H1 (cell line): ENCODE measurements at regions of chr20 and their contacts with region 1.

Region 1: DNA sequence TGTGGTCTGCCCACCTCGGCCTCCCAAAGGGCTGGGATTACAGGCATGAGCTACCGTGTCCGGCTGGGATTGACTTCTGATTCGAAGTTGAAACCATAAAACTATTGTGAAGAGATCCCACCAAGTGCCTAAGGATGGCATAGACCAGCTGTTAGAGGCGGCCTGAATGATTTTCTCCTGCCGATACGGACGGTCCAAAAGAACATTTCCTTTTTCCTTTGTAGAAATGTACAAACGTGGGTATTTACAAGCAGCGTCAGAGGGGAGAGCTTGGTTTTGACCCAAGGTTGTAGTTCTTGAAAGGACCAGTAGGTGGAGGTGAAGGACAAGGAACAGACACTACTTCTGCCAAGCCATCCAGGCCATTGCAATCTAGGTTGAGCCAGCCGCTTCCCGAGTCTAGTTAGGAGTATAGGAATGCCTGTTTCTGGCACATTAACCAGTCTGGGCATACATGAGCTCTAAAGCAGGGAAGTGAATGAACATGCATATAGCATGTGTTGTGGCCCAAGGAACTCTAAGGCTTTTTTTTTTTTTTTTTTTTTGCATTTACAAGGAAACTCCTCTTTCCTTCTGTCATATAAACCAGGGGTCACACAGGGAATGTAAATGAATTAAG is 29.1 kb downstream of the MOCS3 start:
- DNase-seq: peak in 1 of 2 experiments; percentile 83
- H3K4me3 ChIP-seq: no peak overlapping the region
- H3K27ac ChIP-seq: no peak overlapping the region
- H3K4me1 ChIP-seq: peaks cover 3 to 17% (median 7%) of the 10 kb centered on the region in 4 experiments; a peak in 6 of 7 replicates
- H3K27me3 ChIP-seq: no peaks in the 10 kb centered on the region; a peak in 1 of 7 replicates
- CTCF ChIP-seq: peak; percentile 46 to 93 (median 85)
- EP300 ChIP-seq: no peak
- POLR2A ChIP-seq: no peak
- RAD21 ChIP-seq: peak; percentile 99

Region 2: DNA sequence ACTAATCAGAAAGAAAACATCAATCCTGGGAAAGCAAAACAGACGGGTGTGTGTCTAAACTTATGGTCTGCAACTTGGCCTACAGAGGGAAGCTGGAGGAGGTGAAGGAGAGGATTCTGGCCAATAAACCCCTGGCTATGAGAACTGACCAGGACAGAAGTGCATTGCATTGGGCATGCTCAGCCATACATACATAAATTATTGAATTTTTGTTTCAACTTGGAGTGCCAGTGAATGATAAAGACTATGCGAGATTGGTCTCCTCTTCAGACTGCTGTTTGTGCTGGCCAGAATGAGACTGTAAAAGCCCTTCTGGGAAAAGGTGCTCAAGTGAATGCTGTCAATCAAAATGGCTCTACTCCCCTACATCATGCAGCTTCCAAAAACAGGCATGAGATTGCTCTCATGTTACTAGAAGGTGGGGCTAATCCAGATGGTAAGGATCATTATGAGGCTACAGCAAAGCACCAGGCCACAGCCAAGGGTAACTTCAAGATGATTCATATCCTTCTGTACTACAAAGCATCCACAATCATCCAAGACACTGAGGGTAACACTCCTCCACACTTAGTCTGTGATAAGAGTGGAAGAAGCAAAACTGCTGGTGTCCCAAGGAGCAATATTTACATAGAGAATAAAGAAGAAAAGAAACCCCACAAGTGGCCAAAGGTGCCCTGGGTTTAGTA is 73.9 kb before region 1 on chr20:
- CTCF ChIA-PET with region 1: no interaction called
- POLR2A ChIA-PET with region 1: no interaction called
- DNase-seq: no peak
- H3K4me3 ChIP-seq: no peak overlapping the region
- H3K27ac ChIP-seq: no peak overlapping the region
- H3K4me1 ChIP-seq: peaks cover 0 to 12% (median 2%) of the 10 kb centered on the region in 4 experiments; a peak in 3 of 7 replicates
- H3K27me3 ChIP-seq: no peaks in the 10 kb centered on the region
- CTCF ChIP-seq: no peak
- EP300 ChIP-seq: no peak
- POLR2A ChIP-seq: no peak
- RAD21 ChIP-seq: no peak

Region 3: GRCh38 chr20:51042654-51043247 is 55.0 kb after region 1 on chr20:
- CTCF ChIA-PET with region 1: interaction called, 15 read pairs
- POLR2A ChIA-PET with region 1: no interaction called
- DNase-seq: peak in 1 of 2 experiments; percentile 60
- H3K4me3 ChIP-seq: no peak overlapping the region
- H3K27ac ChIP-seq: no peak overlapping the region
- H3K4me1 ChIP-seq: no peaks in the 10 kb centered on the region; a peak in 1 of 7 replicates
- H3K27me3 ChIP-seq: no peaks in the 10 kb centered on the region
- CTCF ChIP-seq: peak; percentile 66 to 69 (median 66)
- EP300 ChIP-seq: no peak
- POLR2A ChIP-seq: no peak
- RAD21 ChIP-seq: peak; percentile 48 to 60

Region 4: GRCh38 chr20:51326201-51326819 is 338.6 kb after region 1 on chr20:
- CTCF ChIA-PET with region 1: interaction called, 165 read pairs
- POLR2A ChIA-PET with region 1: interaction called, 8 read pairs
- DNase-seq: peak in 1 of 2 experiments; percentile 79
- H3K4me3 ChIP-seq: no peak overlapping the region
- H3K27ac ChIP-seq: no peak overlapping the region
- H3K4me1 ChIP-seq: peaks cover 0 to 4% (median 1%) of the 10 kb centered on the region in 4 experiments; a peak in 3 of 7 replicates
- H3K27me3 ChIP-seq: no peaks in the 10 kb centered on the region; a peak in 1 of 7 replicates
- CTCF ChIP-seq: peak; percentile 74 to 92 (median 74)
- EP300 ChIP-seq: no peak
- POLR2A ChIP-seq: no peak
- RAD21 ChIP-seq: peak; percentile 70 to 83

Region 5: DNA sequence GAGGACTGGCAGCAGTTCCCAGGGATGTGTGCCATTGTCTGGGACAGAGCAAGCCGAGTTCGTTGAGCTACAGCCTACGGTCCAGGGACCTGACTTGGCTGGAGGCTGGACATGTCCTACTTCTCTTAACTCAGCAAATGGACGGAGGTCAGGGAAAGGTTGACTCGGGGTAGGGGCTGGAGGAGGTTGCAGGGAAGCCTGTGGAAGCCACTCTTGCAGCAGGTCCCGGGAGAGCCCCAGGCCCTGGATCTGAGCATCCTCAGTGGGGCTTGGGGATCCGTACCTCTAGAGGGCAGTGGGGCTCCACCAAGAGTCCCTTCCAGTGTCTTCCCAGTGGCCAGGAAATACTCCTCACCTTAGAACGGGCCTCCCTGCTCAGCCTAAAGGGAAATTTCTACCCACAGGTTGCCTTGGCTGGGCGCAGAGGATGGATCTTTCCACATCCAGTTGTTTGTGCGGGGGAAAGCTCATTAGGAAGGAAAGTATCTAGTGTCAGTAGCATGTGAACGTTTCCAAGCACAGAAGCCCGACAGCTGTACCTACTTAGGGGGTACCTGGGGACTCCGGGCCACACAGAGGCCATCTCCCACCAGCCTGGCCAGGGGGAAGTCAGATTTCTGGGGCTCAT is 384.6 kb after region 1 on chr20:
- CTCF ChIA-PET with region 1: interaction called, 11 read pairs
- POLR2A ChIA-PET with region 1: interaction called, 4 read pairs
- DNase-seq: peak; percentile 63 to 85
- H3K4me3 ChIP-seq: no peak overlapping the region
- H3K27ac ChIP-seq: no peak overlapping the region
- H3K4me1 ChIP-seq: peaks cover 2 to 4% (median 2%) of the 10 kb centered on the region in 4 experiments; a peak in 3 of 7 replicates
- H3K27me3 ChIP-seq: no peaks in the 10 kb centered on the region
- CTCF ChIP-seq: peak; percentile 78 to 92 (median 86)
- EP300 ChIP-seq: no peak
- POLR2A ChIP-seq: no peak
- RAD21 ChIP-seq: peak; percentile 96

Region 6: DNA sequence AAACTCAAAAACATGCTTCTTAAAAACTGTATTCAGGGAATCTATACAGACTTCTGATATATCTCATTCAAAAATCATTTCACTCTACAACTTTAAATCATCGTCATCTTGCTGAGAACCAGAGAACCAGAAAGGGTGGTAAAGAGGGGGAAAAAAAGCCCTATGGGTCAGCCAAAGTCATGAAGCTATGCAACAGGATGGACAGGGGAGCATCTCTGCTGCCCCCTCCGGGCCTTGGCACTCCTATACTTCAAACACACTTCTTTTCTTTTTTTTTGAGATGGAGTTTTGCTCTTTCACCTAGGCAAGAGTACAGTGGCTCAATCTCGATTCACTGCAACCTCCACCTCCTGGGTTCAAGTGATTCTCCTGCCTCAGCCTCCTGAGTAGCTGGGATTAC is 628.4 kb after region 1 on chr20:
- CTCF ChIA-PET with region 1: interaction called, 10 read pairs
- POLR2A ChIA-PET with region 1: no interaction called
- DNase-seq: no peak
- H3K4me3 ChIP-seq: no peak overlapping the region
- H3K27ac ChIP-seq: no peak overlapping the region
- H3K4me1 ChIP-seq: no peaks in the 10 kb centered on the region; a peak in 1 of 7 replicates
- H3K27me3 ChIP-seq: no peaks in the 10 kb centered on the region
- CTCF ChIP-seq: peak; percentile 46 to 47 (median 47); a peak in 3 of 4 replicates
- EP300 ChIP-seq: no peak
- POLR2A ChIP-seq: no peak
- RAD21 ChIP-seq: peak; percentile 42 to 43; a peak in 3 of 4 replicates